A549 (cell line): ENCODE measurements at regions of chr19 and their contacts with region 1.

Region 1: DNA sequence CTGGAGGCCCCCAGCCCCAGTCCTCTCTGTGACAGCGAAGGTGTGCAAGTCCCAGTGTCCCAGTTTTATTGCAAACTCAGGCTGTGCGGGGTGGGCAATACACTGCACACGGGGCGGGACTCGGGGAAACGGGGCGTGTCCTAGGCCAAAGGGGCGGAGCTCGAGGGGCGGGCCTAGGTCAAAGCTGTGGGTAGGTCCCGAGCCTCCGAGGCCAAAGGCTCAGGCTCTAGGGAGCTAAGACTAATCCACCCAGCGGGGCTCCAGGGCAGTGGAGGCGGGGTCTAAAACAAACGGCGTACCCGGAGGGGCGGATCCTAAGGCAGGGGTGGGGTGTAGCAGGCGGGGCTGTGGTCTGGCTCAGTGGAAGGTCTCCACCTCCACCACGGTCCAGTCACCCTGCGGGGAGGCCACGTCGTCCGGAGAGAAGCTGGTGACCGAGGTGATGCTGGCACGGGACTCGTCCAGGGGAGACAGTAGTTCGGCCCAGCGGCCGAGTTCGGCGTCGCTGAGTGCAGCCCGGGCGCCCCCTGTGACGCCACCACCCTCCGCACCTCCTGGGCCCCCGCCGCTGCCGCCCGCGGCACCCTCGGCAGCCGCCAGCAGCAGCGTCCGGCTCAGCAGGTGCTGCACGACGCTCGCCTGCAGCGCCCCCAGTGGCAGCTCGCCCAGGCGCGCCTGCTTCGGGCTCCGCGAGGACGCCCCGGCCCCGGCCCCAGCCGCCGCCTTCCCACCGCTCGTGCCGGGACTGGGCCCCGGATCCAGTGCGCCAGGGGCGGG is 5.3 kb downstream of the PRR36 start:
- DNase-seq: peak; percentile 83 to 91
- ATAC-seq: peak; percentile 40 to 65
- H3K4me3 ChIP-seq: peak overlapping the region; percentile 54
- H3K27ac ChIP-seq: peak overlapping the region; percentile 59 to 82
- H3K4me1 ChIP-seq: peaks cover 28% of the 10 kb centered on the region
- CTCF ChIP-seq: peak; percentile 72
- EP300 ChIP-seq: no peak
- POLR2A ChIP-seq: peak; percentile 35
- RAD21 ChIP-seq: no peak

Region 2: GRCh38 chr19:7718668-7719067 is 150.2 kb before region 1 on chr19:
- CTCF ChIA-PET with region 1: no interaction called
- POLR2A ChIA-PET with region 1: no interaction called
- DNase-seq: no peak
- ATAC-seq: no peak
- H3K4me3 ChIP-seq: no peak overlapping the region
- H3K27ac ChIP-seq: no peak overlapping the region
- H3K4me1 ChIP-seq: no peaks in the 10 kb centered on the region
- CTCF ChIP-seq: no peak
- EP300 ChIP-seq: no peak
- POLR2A ChIP-seq: no peak
- RAD21 ChIP-seq: no peak

Region 3: DNA sequence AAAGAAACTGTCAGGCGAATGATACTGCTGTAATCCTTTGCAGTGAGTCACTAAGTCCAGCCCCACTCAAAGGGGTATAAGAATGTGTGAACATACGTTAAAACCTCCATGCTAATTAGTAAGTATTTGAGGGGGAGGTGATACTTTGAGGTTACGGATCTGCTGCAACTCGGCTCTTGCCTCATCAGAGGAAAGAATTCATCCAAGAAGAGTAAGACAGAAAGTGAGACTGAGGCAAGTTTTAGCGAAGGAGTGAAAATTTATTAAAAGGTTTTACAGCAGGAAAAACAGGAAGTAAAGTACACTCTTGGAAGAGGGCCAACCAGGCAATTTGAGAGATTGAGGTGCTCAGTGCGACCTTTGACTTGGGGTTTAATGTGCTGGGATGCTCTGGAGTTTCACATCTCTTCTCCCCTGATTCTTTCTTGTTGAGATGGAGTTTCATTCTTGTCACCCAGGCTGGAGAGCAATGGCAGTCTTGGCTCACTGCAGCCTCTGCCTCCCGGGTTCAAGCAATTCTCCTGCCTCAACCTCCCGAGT is 96.0 kb before region 1 on chr19:
- CTCF ChIA-PET with region 1: no interaction called
- POLR2A ChIA-PET with region 1: no interaction called
- DNase-seq: no peak
- ATAC-seq: no peak
- H3K4me3 ChIP-seq: no peak overlapping the region
- H3K27ac ChIP-seq: no peak overlapping the region
- H3K4me1 ChIP-seq: no peaks in the 10 kb centered on the region
- CTCF ChIP-seq: no peak
- EP300 ChIP-seq: no peak
- POLR2A ChIP-seq: no peak
- RAD21 ChIP-seq: no peak

Region 4: DNA sequence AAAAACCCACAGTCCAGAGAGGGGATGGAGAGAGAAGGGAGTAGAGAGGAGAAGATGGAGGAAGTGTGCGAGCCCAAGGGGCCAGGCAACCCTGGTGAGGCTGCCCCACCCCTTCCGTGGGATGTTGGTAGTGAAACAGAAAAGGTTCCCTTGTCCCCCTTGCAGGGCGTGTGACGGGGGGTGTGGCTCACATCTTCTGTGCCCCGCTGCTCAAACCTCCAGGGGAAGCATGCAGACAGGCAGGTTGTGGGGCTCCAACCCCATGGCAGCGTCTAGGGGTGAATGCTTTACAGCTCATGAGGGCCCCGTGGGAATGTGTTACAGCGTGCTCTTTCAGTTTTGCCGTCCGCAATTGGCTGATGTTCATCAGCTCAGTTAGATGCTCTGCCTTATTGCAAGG is 53.5 kb before region 1 on chr19:
- CTCF ChIA-PET with region 1: no interaction called
- POLR2A ChIA-PET with region 1: no interaction called
- DNase-seq: no peak
- ATAC-seq: no peak
- H3K4me3 ChIP-seq: no peak overlapping the region
- H3K27ac ChIP-seq: no peak overlapping the region
- H3K4me1 ChIP-seq: no peaks in the 10 kb centered on the region
- CTCF ChIP-seq: no peak
- EP300 ChIP-seq: no peak
- POLR2A ChIP-seq: no peak
- RAD21 ChIP-seq: no peak

Region 5: GRCh38 chr19:7829561-7830271 is 39.1 kb before region 1 on chr19 and contains the start of gene EVI5L:
- CTCF ChIA-PET with region 1: interaction called, 12 read pairs
- POLR2A ChIA-PET with region 1: no interaction called
- DNase-seq: peak; percentile 96 to 99
- ATAC-seq: peak; percentile 93 to 95
- H3K4me3 ChIP-seq: peak within 1 kb of the TSS; percentile 89
- H3K27ac ChIP-seq: peak within 1 kb of the TSS; percentile 67 to 85
- H3K4me1 ChIP-seq: peaks cover 10% of the 10 kb centered on the region; the same call in 1 of the 3 replicates
- CTCF ChIP-seq: no peak
- EP300 ChIP-seq: no peak
- POLR2A ChIP-seq: no peak
- RAD21 ChIP-seq: no peak
- polyA plus RNA-seq, gene EVI5L: 1.1 and 1.2 TPM in 2 replicates

Region 6: GRCh38 chr19:7879836-7880235 is 11.0 kb after region 1 on chr19:
- CTCF ChIA-PET with region 1: interaction called, 12 read pairs
- POLR2A ChIA-PET with region 1: no interaction called
- DNase-seq: no peak
- ATAC-seq: 0 out of 6 replicates have a peak, but pooled peaks of 1 of the 2 experiments have one; percentile 24
- H3K4me3 ChIP-seq: no peak overlapping the region
- H3K27ac ChIP-seq: no peak overlapping the region
- H3K4me1 ChIP-seq: 0 out of 3 replicates have a peak, but pooled peaks cover 3% of the 10 kb centered on the region
- CTCF ChIP-seq: no peak
- EP300 ChIP-seq: no peak
- POLR2A ChIP-seq: no peak
- RAD21 ChIP-seq: no peak

Region 7: GRCh38 chr19:7897292-7897691 is 28.4 kb after region 1 on chr19:
- CTCF ChIA-PET with region 1: interaction called, 14 read pairs
- POLR2A ChIA-PET with region 1: interaction called, 3 read pairs
- DNase-seq: no peak
- ATAC-seq: no peak
- H3K4me3 ChIP-seq: no peak overlapping the region
- H3K27ac ChIP-seq: no peak overlapping the region
- H3K4me1 ChIP-seq: no peaks in the 10 kb centered on the region
- CTCF ChIP-seq: no peak
- EP300 ChIP-seq: no peak
- POLR2A ChIP-seq: no peak
- RAD21 ChIP-seq: no peak

Region 8: GRCh38 chr19:7919610-7920518 is 51.0 kb after region 1 on chr19 and contains the start of gene SNAPC2:
- CTCF ChIA-PET with region 1: interaction called, 10 read pairs
- POLR2A ChIA-PET with region 1: interaction called, 13 read pairs
- DNase-seq: peak; percentile 60 to 94
- ATAC-seq: peak; percentile 27 to 71
- H3K4me3 ChIP-seq: peak within 1 kb of the TSS; percentile 72
- H3K27ac ChIP-seq: peak within 1 kb of the TSS; percentile 95 to 96
- H3K4me1 ChIP-seq: peaks cover 19% of the 10 kb centered on the region
- CTCF ChIP-seq: no peak
- EP300 ChIP-seq: no peak
- POLR2A ChIP-seq: peak; percentile 51
- RAD21 ChIP-seq: no peak
- polyA plus RNA-seq, gene SNAPC2: 8.8 and 9.2 TPM in 2 replicates